B cell (primary cell): ENCODE measurements at regions of chr17 and their contacts with region 1.

Region 1: GRCh38 chr17:30344283-30345088 is 10.6 kb upstream of the TMIGD1 start:
- DNase-seq: no peak
- ATAC-seq: no peak
- H3K4me3 ChIP-seq: no peak overlapping the region
- H3K4me3 Mint-ChIP-seq: no peak overlapping the region
- H3K27ac ChIP-seq: no peak overlapping the region
- H3K27ac Mint-ChIP-seq: no peak overlapping the region
- H3K4me1 ChIP-seq: peaks cover 0 to 4% of the 10 kb centered on the region in 2 donors
- H3K4me1 Mint-ChIP-seq: peaks cover 5% of the 10 kb centered on the region
- H3K27me3 ChIP-seq: no peaks in the 10 kb centered on the region
- H3K27me3 Mint-ChIP-seq: peaks cover 3% of the 10 kb centered on the region
- CTCF ChIP-seq: no peak

Region 2: GRCh38 chr17:30124273-30124796 is 220.2 kb before region 1 on chr17:
- CTCF ChIA-PET with region 1: interaction called, 13 read pairs
- POLR2A ChIA-PET with region 1: no interaction called
- intact Hi-C with region 1: no loop called
- DNase-seq: no peak
- ATAC-seq: no peak
- H3K4me3 ChIP-seq: no peak overlapping the region
- H3K4me3 Mint-ChIP-seq: no peak overlapping the region
- H3K27ac ChIP-seq: no peak overlapping the region
- H3K27ac Mint-ChIP-seq: no peak overlapping the region
- H3K4me1 ChIP-seq: peaks cover 0 to 6% of the 10 kb centered on the region in 2 donors
- H3K4me1 Mint-ChIP-seq: peaks cover 30% of the 10 kb centered on the region
- H3K27me3 ChIP-seq: no peaks in the 10 kb centered on the region
- H3K27me3 Mint-ChIP-seq: no peaks in the 10 kb centered on the region
- CTCF ChIP-seq: no peak

Region 3: DNA sequence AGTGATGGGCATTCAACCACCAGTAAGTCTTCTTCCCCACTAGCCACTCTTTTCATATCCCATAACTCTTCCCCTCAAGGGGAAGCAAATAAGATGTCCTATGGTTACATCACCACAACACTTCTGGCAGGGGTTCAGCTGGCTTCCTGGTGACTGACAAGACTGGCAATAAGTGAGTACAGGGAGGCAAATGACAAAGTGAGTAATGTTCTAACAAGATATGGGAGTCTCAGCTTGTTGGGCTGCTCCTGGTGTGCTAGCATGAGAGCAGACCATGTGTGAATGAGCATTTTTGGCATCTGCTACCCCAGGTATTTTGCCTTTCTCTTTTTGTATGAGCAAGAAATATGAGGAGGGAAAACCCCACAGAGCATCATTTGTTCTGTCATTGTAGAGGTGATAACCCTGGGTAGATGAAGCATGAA is 20.6 kb before region 1 on chr17:
- CTCF ChIA-PET with region 1: interaction called, 16 read pairs
- POLR2A ChIA-PET with region 1: no interaction called
- intact Hi-C with region 1: no loop called
- DNase-seq: no peak
- ATAC-seq: no peak
- H3K4me3 ChIP-seq: no peak overlapping the region
- H3K4me3 Mint-ChIP-seq: no peak overlapping the region
- H3K27ac ChIP-seq: no peak overlapping the region
- H3K27ac Mint-ChIP-seq: no peak overlapping the region
- H3K4me1 ChIP-seq: no peaks in the 10 kb centered on the region
- H3K4me1 Mint-ChIP-seq: peaks cover 7% of the 10 kb centered on the region
- H3K27me3 ChIP-seq: no peaks in the 10 kb centered on the region
- H3K27me3 Mint-ChIP-seq: no peaks in the 10 kb centered on the region
- CTCF ChIP-seq: no peak

Region 4: GRCh38 chr17:30363715-30364202 is 19.3 kb after region 1 on chr17:
- CTCF ChIA-PET with region 1: interaction called, 4 read pairs
- POLR2A ChIA-PET with region 1: no interaction called
- intact Hi-C with region 1: loop called (anchors 1 kb)
- DNase-seq: peak; percentile 67
- ATAC-seq: peak; percentile 84
- H3K4me3 ChIP-seq: peak overlapping the region in 2 of 5 experiments; percentile 12 to 15
- H3K4me3 Mint-ChIP-seq: peak overlapping the region; percentile 64
- H3K27ac ChIP-seq: no peak overlapping the region
- H3K27ac Mint-ChIP-seq: peak overlapping the region; percentile 83
- H3K4me1 ChIP-seq: peaks cover 13 to 17% of the 10 kb centered on the region in 2 donors
- H3K4me1 Mint-ChIP-seq: peaks cover 20% of the 10 kb centered on the region
- H3K27me3 ChIP-seq: peaks cover 0 to 7% (median 0%) of the 10 kb centered on the region in 4 experiments
- H3K27me3 Mint-ChIP-seq: peaks cover 6% of the 10 kb centered on the region
- CTCF ChIP-seq: no peak

Region 5: DNA sequence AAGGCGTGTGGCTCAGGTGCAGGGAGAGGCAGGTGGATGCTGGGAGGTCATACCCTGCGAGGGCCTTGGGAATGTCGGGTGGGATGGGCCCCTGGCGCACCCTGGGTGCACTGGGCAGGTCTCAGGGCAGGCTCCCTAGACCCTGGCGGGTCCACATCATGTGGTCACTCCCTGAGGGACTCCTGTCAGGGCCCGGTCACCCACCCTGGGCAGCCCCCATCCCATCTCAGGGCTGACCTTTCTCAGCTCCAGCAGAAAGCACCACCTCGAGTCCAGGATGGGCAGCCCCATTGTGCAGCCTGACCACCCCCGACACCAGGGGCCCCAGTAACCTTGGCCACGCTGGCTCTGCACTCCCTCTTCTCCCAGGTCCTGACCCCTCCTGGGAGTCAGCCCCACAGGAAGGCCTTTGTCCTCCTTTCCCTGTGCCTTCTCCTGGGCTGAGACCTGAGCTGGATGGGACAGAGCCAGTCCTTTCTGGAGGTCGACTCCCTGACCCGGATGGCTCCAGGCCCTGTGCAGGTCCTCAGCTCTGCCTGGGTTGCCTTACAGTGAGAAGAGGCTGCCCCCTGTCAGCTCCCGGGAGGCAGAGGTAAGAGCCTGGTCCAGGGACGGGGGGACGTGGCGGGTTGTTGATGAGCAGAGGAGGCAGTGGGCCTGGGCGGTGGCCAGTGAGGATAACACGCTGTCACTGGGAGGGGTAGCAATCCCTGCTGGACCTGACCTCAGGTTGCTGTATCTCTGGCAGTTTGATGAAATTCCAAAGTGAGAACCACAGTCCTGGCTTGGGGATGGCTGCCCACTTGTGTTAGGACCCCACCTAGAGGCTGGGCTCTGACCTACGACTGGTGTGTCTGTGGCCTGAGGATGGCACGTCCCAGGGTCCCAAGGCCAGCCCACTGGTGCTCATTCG is 210.6 kb after region 1 on chr17:
- CTCF ChIA-PET with region 1: interaction called, 11 read pairs
- POLR2A ChIA-PET with region 1: no interaction called
- intact Hi-C with region 1: no loop called
- DNase-seq: peak; percentile 30
- ATAC-seq: no peak
- H3K4me3 ChIP-seq: no peak overlapping the region
- H3K4me3 Mint-ChIP-seq: no peak overlapping the region
- H3K27ac ChIP-seq: no peak overlapping the region
- H3K27ac Mint-ChIP-seq: no peak overlapping the region
- H3K4me1 ChIP-seq: peaks cover 20 to 38% of the 10 kb centered on the region in 2 donors
- H3K4me1 Mint-ChIP-seq: peaks cover 34% of the 10 kb centered on the region
- H3K27me3 ChIP-seq: no peaks in the 10 kb centered on the region
- H3K27me3 Mint-ChIP-seq: no peaks in the 10 kb centered on the region
- CTCF ChIP-seq: no peak

Region 6: GRCh38 chr17:30717301-30718098 is 373.0 kb after region 1 on chr17:
- CTCF ChIA-PET with region 1: interaction called, 5 read pairs
- POLR2A ChIA-PET with region 1: no interaction called
- intact Hi-C with region 1: loop called (anchors 2 kb)
- DNase-seq: no peak
- ATAC-seq: no peak
- H3K4me3 ChIP-seq: no peak overlapping the region
- H3K4me3 Mint-ChIP-seq: no peak overlapping the region
- H3K27ac ChIP-seq: no peak overlapping the region
- H3K27ac Mint-ChIP-seq: no peak overlapping the region
- H3K4me1 ChIP-seq: peaks cover 0 to 6% of the 10 kb centered on the region in 2 donors
- H3K4me1 Mint-ChIP-seq: peaks cover 10% of the 10 kb centered on the region
- H3K27me3 ChIP-seq: no peaks in the 10 kb centered on the region
- H3K27me3 Mint-ChIP-seq: no peaks in the 10 kb centered on the region
- CTCF ChIP-seq: no peak